CD8-positive, alpha-beta T cell (primary cell): ENCODE measurements at regions of chr2 and their contacts with region 1.

Region 1: GRCh38 chr2:190534310-190535120 is at the start of gene NEMP2:
- DNase-seq: peak; percentile 69 to 93 (median 81)
- ATAC-seq: peak; percentile 68
- H3K4me3 ChIP-seq: peak within 1 kb of the TSS; percentile 67 to 73
- H3K4me3 Mint-ChIP-seq: peak within 1 kb of the TSS; percentile 96
- H3K27ac ChIP-seq: peak within 1 kb of the TSS; percentile 92 to 95
- H3K27ac Mint-ChIP-seq: peak within 1 kb of the TSS; percentile 100
- H3K4me1 ChIP-seq: peaks cover 39% of the 10 kb centered on the region
- H3K4me1 Mint-ChIP-seq: peaks cover 64% of the 10 kb centered on the region
- H3K27me3 ChIP-seq: no peaks in the 10 kb centered on the region
- H3K27me3 Mint-ChIP-seq: no peaks in the 10 kb centered on the region
- CTCF ChIP-seq: no peak
- total RNA-seq, gene NEMP2: 7.2 to 7.8 TPM

Region 2: DNA sequence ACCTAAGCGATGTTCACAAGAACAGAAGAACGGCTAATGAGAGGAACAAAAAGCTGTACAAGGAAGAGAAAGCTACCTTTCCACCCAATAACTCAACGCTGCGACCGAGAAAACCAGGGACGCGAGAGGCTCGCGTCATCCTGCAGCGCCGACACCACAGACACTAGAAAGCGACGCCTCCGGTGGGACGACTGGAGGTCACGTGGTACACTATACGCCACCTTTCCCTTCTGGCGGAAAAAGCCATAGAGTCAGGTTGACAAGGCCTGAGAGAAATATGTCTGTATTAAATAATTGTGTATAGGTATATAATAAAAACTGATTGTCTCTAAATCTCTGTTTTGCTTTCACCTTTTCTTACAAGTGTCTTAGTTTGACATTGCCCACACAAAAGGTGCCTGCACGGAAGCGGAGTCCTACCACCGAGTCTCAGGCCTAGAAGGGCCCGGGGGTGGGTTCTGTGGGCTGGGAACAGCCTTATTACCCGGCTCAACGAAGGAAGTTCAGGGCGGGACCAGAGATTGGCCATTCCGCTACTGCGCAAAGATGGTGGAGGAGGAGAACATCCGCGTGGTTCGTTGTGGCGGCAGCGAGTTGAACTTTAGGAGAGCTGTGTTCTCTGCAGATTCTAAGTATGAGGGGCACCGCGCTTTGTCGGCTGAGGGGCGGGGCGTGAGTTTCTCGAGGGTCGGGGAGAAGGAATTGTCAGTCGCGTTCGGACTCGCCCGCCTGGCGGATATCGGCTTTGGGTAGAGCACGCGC is 1093.4 kb before region 1 on chr2 and contains the start of gene WDR75:
- CTCF ChIA-PET with region 1: no interaction called
- POLR2A ChIA-PET with region 1: no interaction called
- intact Hi-C with region 1: loop called in 1 of 2 experiments (anchors 10 kb)
- DNase-seq: peak; percentile 85 to 97 (median 92)
- ATAC-seq: peak; percentile 94
- H3K4me3 ChIP-seq: peak within 1 kb of the TSS; percentile 71 to 92
- H3K4me3 Mint-ChIP-seq: peak within 1 kb of the TSS; percentile 100
- H3K27ac ChIP-seq: peak within 1 kb of the TSS; percentile 96 to 98
- H3K27ac Mint-ChIP-seq: peak within 1 kb of the TSS; percentile 100
- H3K4me1 ChIP-seq: peaks cover 33% of the 10 kb centered on the region
- H3K4me1 Mint-ChIP-seq: peaks cover 12% of the 10 kb centered on the region
- H3K27me3 ChIP-seq: no peaks in the 10 kb centered on the region
- H3K27me3 Mint-ChIP-seq: no peaks in the 10 kb centered on the region
- CTCF ChIP-seq: no peak
- total RNA-seq, gene WDR75: 45.0 to 52.6 TPM

Region 3: GRCh38 chr2:189783927-189784867 is 750.3 kb before region 1 on chr2 and contains the starts of genes ORMDL1 and PMS1:
- CTCF ChIA-PET with region 1: no interaction called
- POLR2A ChIA-PET with region 1: no interaction called
- intact Hi-C with region 1: loop called in 1 of 2 experiments (anchors 10 kb)
- DNase-seq: peak; percentile 86 to 98 (median 95)
- ATAC-seq: peak; percentile 89
- H3K4me3 ChIP-seq: peak within 1 kb of the TSS; percentile 56 to 91
- H3K4me3 Mint-ChIP-seq: peak within 1 kb of the TSS; percentile 97
- H3K27ac ChIP-seq: peak within 1 kb of the TSS; percentile 96 to 97
- H3K27ac Mint-ChIP-seq: peak within 1 kb of the TSS; percentile 97
- H3K4me1 ChIP-seq: peaks cover 45% of the 10 kb centered on the region
- H3K4me1 Mint-ChIP-seq: peaks cover 65% of the 10 kb centered on the region
- H3K27me3 ChIP-seq: no peaks in the 10 kb centered on the region
- H3K27me3 Mint-ChIP-seq: no peaks in the 10 kb centered on the region
- CTCF ChIP-seq: no peak
- total RNA-seq, gene ORMDL1: 105 to 107 TPM
- total RNA-seq, gene PMS1: 12.2 to 15.1 TPM

Region 4: DNA sequence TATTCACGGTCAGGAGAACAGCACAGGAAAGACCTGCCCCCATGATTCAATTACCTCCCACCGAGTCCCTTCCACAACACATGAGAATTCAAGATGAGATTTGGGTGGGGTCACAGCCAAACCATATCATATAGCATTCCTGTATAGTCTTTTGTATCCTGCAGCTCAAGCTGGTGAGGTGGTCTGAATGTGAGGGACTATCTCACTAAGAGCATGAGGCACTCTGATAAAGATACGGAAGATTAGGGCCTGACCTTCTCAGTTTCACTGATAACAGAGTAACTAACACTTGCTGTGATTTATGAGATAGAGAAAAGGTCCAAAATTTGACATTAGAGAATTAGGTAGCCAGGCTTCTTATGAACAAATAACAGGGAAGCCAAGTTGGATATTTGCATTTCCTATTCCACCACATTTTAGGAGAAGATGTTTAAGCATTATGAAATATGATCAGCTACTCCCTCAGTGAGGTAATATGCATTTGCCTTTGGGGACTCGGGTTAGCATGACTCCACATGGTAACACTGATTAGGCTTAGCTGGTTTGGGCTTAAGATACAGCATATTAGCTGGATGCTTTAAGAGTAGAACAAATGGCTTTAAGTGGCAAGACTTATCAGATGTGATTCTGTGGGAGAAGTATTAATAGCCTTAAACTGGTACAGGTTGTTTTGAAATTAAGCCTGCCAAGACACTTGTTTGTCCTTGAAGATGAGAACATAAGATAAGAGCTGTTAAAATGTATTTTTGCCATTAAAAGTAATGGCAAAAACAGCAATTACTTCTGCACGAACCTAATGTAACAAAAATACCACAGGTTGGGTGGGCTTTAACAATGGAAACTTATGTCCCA is 365.1 kb before region 1 on chr2:
- CTCF ChIA-PET with region 1: no interaction called
- POLR2A ChIA-PET with region 1: no interaction called
- intact Hi-C with region 1: no loop called
- DNase-seq: no peak
- ATAC-seq: no peak
- H3K4me3 ChIP-seq: no peak overlapping the region
- H3K4me3 Mint-ChIP-seq: no peak overlapping the region
- H3K27ac ChIP-seq: no peak overlapping the region
- H3K27ac Mint-ChIP-seq: no peak overlapping the region
- H3K4me1 ChIP-seq: no peaks in the 10 kb centered on the region
- H3K4me1 Mint-ChIP-seq: no peaks in the 10 kb centered on the region
- H3K27me3 ChIP-seq: no peaks in the 10 kb centered on the region
- H3K27me3 Mint-ChIP-seq: peaks cover 6% of the 10 kb centered on the region
- CTCF ChIP-seq: no peak

Region 5: DNA sequence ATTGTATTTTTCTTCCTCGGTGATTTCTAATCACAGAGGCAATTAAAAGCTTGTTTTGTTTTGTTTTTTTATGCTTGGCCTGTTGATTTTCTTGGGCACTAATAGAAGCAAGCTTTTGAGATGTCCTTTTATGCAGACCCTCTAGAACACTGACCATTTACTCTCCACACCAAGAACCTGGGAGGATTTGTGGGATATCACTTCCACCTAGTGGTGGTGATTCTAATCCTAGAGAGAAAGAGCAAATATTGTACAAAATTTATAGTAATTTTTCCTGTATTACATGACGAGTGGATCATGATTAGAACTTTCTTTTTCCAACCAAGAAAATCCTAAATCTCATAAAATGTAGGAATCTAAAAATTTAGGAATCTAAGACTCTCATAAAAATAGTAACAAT is 23.4 kb before region 1 on chr2:
- CTCF ChIA-PET with region 1: interaction called, 5 read pairs
- POLR2A ChIA-PET with region 1: interaction called, 25 read pairs
- intact Hi-C with region 1: loop called in 1 of 2 experiments (anchors 2 kb)
- DNase-seq: no peak
- ATAC-seq: no peak
- H3K4me3 ChIP-seq: no peak overlapping the region
- H3K4me3 Mint-ChIP-seq: no peak overlapping the region
- H3K27ac ChIP-seq: no peak overlapping the region
- H3K27ac Mint-ChIP-seq: peak overlapping the region; percentile 62
- H3K4me1 ChIP-seq: peaks cover 9% of the 10 kb centered on the region
- H3K4me1 Mint-ChIP-seq: peaks cover 21% of the 10 kb centered on the region
- H3K27me3 ChIP-seq: no peaks in the 10 kb centered on the region
- H3K27me3 Mint-ChIP-seq: no peaks in the 10 kb centered on the region
- CTCF ChIP-seq: no peak

Region 6: DNA sequence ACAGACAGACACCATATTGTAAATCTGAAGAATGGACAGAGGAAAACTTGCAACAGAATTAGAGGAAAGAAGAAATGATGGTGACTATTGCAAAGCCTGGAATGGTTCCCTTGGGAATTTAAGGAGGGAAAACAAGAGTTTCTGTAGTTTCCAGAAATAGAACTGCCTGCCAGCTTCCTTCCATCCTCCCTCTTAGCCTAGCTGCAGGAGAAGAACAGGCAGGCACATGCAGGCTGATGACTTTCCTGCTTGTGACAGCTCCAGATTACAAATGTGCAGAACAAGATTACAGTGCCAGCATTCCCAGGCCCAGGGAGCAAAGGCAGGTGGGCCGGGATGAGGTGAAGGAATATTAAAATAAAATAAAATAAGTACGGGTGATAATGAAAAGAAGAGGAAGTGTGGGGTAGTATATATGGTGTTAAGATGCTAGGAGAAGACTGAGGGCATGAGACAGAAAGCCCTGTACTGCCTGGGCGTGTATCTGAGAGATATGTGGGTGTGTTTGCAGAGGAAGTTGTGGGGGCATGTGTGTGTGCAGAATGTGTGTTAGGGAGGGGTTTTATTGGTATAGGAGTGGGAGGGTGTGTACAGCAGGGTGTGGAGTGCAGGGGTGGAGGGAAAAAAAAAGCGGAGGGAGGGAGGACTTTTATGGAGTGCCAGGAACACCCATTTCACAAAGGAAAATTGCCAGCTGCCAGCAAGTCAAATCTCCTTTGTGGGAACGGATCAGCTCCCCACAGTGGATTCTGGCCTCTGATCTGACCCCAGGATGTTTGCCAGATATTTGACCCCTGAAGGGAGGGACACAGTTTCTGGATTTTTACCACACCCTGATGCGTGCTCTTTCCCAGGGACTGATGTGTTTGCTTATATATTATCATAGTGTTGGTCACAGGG is 43.9 kb after region 1 on chr2:
- CTCF ChIA-PET with region 1: no interaction called
- POLR2A ChIA-PET with region 1: no interaction called
- intact Hi-C with region 1: loop called in 1 of 2 experiments (anchors 5 kb)
- DNase-seq: peak in 4 of 9 experiments; percentile 13 to 58 (median 26)
- ATAC-seq: peak; percentile 79
- H3K4me3 ChIP-seq: peak overlapping the region in 1 of 2 experiments; percentile 3
- H3K4me3 Mint-ChIP-seq: peak overlapping the region; percentile 33
- H3K27ac ChIP-seq: peak overlapping the region in 1 of 2 experiments; percentile 68
- H3K27ac Mint-ChIP-seq: peak overlapping the region; percentile 24
- H3K4me1 ChIP-seq: peaks cover 24% of the 10 kb centered on the region
- H3K4me1 Mint-ChIP-seq: peaks cover 39% of the 10 kb centered on the region
- H3K27me3 ChIP-seq: no peaks in the 10 kb centered on the region
- H3K27me3 Mint-ChIP-seq: no peaks in the 10 kb centered on the region
- CTCF ChIP-seq: no peak

Region 7: DNA sequence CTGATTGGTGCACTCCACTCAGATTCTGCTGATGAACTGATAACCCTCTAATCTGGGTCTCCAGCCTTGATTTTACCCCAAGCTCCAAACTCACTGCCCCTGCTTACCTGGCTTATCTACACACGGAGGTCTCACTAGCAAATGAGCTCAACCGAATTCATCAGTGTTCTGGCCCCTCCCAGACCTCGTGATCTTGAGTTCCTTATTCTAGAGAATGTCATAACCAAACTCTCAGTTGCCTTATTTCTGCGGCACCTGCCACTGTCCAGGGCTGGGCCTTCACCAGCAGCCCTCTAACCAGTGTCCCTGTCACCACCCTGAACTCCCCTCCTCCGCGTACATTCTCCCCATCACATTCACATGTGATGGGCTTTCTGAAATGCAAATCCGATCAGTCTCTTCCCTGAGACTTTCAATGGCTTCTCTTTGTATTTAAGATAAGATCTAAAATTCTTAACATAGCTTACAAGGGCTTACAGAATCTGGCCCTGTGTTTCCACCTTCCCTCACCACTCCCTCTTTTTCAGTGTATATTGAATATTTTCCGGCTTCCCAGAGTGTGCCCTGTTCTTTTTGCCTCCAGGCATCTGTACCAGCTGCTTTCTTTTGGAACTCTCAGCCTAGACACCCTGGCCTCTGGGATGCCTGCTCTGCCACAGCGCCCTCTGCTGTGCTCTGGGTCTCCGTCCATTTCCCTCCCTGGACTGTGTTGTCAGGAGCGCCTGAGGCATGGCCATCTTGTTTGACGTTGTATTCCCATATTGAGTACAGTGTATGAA is 145.5 kb after region 1 on chr2:
- CTCF ChIA-PET with region 1: interaction called, 8 read pairs
- POLR2A ChIA-PET with region 1: interaction called, 3 read pairs
- intact Hi-C with region 1: loop called in 1 of 2 experiments (anchors 2 kb)
- DNase-seq: peak; percentile 23 to 79 (median 59)
- ATAC-seq: peak; percentile 82
- H3K4me3 ChIP-seq: no peak overlapping the region
- H3K4me3 Mint-ChIP-seq: no peak overlapping the region
- H3K27ac ChIP-seq: no peak overlapping the region
- H3K27ac Mint-ChIP-seq: peak overlapping the region; percentile 39
- H3K4me1 ChIP-seq: peaks cover 9% of the 10 kb centered on the region
- H3K4me1 Mint-ChIP-seq: peaks cover 40% of the 10 kb centered on the region
- H3K27me3 ChIP-seq: no peaks in the 10 kb centered on the region
- H3K27me3 Mint-ChIP-seq: no peaks in the 10 kb centered on the region
- CTCF ChIP-seq: peak; percentile 80